ENCODE measurements at regions of chr6 and their contacts with region 1.

Region 1: DNA sequence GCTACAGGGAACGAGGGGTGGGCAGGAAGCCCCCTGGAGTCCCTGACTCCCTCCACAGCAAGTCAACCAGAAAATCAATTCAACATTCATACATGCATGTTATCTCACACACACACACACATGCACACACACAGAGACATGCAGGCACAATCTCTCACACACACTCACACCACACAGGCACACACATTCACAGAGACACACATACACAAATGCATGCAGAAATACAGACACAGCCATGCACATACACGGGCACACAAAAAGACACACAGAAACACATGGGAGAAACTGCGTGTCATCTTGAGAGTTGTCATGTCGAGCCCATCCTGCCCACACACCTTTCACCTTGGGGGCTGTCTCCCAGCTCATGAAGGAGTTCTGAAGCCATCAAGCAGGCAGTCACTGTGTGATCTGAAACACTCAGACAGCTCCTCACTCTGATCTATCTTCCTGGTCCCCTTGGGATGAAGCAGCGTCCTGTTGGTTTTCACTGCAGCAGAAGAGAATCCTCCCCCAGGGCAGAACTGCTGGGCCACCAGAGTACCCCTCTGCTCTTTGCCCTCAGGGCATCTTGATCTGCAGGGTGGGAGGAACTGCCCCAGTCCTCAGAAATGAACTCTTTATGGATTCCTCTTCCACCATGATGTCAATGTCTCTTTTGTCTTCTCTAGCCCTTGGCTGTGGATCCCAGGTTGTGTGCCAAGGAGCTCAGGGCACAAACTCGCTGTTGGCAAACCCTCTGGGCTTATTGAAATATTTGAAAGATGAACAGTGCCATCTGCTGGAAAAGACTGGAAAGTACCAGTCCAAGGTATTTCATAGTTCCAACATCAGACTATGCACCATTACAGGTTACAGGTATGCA is 8.8 kb downstream of the RAET1L start:
- DNase-seq: peak; percentile 63
- H3K4me3 Mint-ChIP-seq: no peak overlapping the region
- H3K27ac Mint-ChIP-seq: no peak overlapping the region
- H3K4me1 Mint-ChIP-seq: peaks cover 28% of the 10 kb centered on the region
- H3K27me3 Mint-ChIP-seq: peaks cover 83% of the 10 kb centered on the region

Region 2: GRCh38 chr6:149545754-149546528 is 470.6 kb before region 1 on chr6 and contains the start of gene PPIL4:
- CTCF ChIA-PET with region 1: no interaction called
- DNase-seq: peak; percentile 96
- H3K4me3 Mint-ChIP-seq: peak within 1 kb of the TSS; percentile 98
- H3K27ac Mint-ChIP-seq: peak within 1 kb of the TSS; percentile 98
- H3K4me1 Mint-ChIP-seq: peaks cover 44% of the 10 kb centered on the region
- H3K27me3 Mint-ChIP-seq: peaks cover 12% of the 10 kb centered on the region

Region 3: DNA sequence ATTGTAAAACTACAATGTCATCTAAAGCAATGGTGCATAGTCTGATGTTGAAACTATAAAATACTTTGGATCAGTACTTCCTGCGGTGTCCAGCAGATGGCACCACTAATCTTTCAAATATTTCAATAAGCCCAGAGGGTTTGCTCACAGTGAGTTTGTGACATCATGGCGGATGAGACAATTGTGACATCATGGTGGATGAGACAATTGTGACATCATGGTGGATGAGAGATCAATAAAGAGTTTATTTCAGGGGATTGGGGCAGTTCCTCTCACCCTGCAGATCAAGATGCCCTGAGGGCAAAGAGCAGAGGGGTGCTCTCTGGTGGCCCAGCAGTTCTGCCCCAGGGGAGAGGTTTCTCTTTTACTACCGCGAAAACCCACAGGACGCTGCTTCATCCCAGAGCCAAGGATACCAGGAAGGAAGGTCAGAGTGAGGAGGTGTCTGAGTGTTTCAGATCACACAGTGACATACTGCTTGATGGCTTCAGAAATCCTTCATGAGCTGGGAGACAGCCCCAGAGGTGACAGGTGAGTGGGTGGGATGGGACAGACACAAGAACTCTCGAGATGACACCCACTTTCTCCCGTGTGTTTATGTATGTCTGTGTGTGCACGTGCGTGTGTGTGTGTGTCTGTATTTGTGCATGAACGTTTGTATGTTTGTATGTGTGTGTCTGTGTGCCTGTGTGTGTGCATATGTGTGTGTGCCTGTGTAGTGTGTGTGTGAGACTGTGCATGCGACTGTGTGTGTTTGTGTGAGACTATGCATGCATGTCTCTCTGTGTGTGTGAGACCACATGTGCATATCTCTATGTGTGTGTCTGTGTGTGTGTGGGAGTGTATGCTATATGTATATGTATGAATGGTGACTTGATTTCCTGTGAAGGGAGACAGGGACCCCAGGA is 82.1 kb before region 1 on chr6:
- CTCF ChIA-PET with region 1: interaction called, 18 read pairs
- DNase-seq: peak; percentile 81
- H3K4me3 Mint-ChIP-seq: no peak overlapping the region
- H3K27ac Mint-ChIP-seq: no peak overlapping the region
- H3K4me1 Mint-ChIP-seq: peaks cover 38% of the 10 kb centered on the region
- H3K27me3 Mint-ChIP-seq: peaks cover 91% of the 10 kb centered on the region

Region 4: DNA sequence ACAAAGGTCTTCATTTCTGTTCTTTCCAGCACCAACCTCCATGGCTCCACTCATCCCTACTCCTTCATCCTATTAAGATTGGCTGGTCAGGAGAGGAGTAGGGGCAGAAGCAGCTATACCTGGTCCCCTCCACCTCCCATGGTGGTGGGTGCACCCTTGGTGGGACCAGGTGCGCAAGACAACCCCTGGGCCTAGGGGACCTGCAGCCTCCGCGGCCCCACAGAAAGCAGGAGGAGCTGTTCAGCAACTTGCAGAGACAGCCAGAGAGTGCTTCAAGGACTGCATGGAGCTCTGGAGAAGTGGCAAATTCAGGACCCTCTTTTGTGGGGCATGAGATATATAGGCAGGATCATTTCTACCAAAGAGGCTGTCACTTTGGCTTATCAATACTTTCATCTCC is 64.9 kb before region 1 on chr6:
- CTCF ChIA-PET with region 1: interaction called, 13 read pairs
- DNase-seq: no peak
- H3K4me3 Mint-ChIP-seq: no peak overlapping the region
- H3K27ac Mint-ChIP-seq: no peak overlapping the region
- H3K4me1 Mint-ChIP-seq: peaks cover 11% of the 10 kb centered on the region
- H3K27me3 Mint-ChIP-seq: peaks cover 90% of the 10 kb centered on the region